BJ (cell line): ENCODE measurements at regions of chr1 and their contacts with region 1.

Region 1: GRCh38 chr1:153734396-153735089 is 6.7 kb downstream of the INTS3 start:
- DNase-seq: no peak
- H3K4me3 ChIP-seq: no peak overlapping the region
- H3K27me3 ChIP-seq: no peaks in the 10 kb centered on the region
- CTCF ChIP-seq: no peak

Region 2: GRCh38 chr1:153749408-153750005 is 15.0 kb after region 1 on chr1:
- CTCF ChIA-PET with region 1: interaction called, 14 read pairs
- POLR2A ChIA-PET with region 1: no interaction called
- DNase-seq: peak; percentile 24
- H3K4me3 ChIP-seq: no peak overlapping the region
- H3K27me3 ChIP-seq: no peaks in the 10 kb centered on the region
- CTCF ChIP-seq: peak; percentile 96

Region 3: GRCh38 chr1:153866045-153866850 is 131.7 kb after region 1 on chr1:
- CTCF ChIA-PET with region 1: no interaction called
- POLR2A ChIA-PET with region 1: no interaction called
- DNase-seq: peak; percentile 18
- H3K4me3 ChIP-seq: no peak overlapping the region
- H3K27me3 ChIP-seq: no peaks in the 10 kb centered on the region
- CTCF ChIP-seq: no peak

Region 4: GRCh38 chr1:153903841-153904455 is 169.4 kb after region 1 on chr1:
- CTCF ChIA-PET with region 1: no interaction called
- POLR2A ChIA-PET with region 1: no interaction called
- DNase-seq: no peak
- H3K4me3 ChIP-seq: no peak overlapping the region
- H3K27me3 ChIP-seq: no peaks in the 10 kb centered on the region
- CTCF ChIP-seq: no peak